ENCODE measurements at regions of chr2 and their contacts with region 1.

Region 1: GRCh38 chr2:113138428-113139322 is 11.3 kb downstream of the IL1RN start:
- DNase-seq: peak; percentile 66 to 88 (median 77)
- ATAC-seq: peak; percentile 95
- H3K4me3 ChIP-seq: no peak overlapping the region
- H3K27ac ChIP-seq: peak overlapping the region; percentile 22 to 66 (median 44)
- H3K4me1 ChIP-seq: peaks cover 11% of the 10 kb centered on the region
- H3K27me3 ChIP-seq: no peaks in the 10 kb centered on the region
- CTCF ChIP-seq: peak; percentile 73 to 89 (median 87)
- POLR2A ChIP-seq: no peak

Region 2: GRCh38 chr2:113203901-113204519 is 65.3 kb after region 1 on chr2:
- intact Hi-C with region 1: loop called (anchors 5 kb)
- DNase-seq: peak; percentile 73 to 79 (median 78)
- ATAC-seq: peak; percentile 56
- H3K4me3 ChIP-seq: no peak overlapping the region
- H3K27ac ChIP-seq: peak overlapping the region in 3 of 4 donors; percentile 27 to 40 (median 30)
- H3K4me1 ChIP-seq: peaks cover 28% of the 10 kb centered on the region
- H3K27me3 ChIP-seq: no peaks in the 10 kb centered on the region
- CTCF ChIP-seq: peak; percentile 61 to 87 (median 79)
- POLR2A ChIP-seq: peak in 1 of 3 donors; percentile 17

Region 3: DNA sequence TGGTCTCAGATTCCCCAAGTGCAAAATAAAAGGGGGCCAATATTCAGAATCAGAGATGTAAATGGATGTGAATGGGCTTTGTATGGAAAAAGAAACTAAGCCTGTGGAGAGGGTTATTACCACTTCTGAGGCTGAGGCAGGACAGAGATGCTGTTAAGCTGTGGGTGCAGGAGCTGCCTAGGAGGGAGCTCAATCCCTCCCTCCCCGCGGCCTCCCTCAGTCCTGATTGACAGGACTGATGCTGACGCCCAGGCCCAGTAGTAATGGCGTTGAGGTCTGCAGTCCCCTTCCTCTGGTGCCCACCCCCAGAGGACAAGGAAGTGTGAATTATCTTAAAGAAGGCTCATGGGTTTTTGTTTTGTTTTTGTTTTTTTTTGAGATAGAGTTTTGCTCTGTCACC is 75.5 kb after region 1 on chr2:
- intact Hi-C with region 1: no loop called
- DNase-seq: no peak
- ATAC-seq: no peak
- H3K4me3 ChIP-seq: no peak overlapping the region
- H3K27ac ChIP-seq: no peak overlapping the region
- H3K4me1 ChIP-seq: peaks cover 31% of the 10 kb centered on the region
- H3K27me3 ChIP-seq: no peaks in the 10 kb centered on the region
- CTCF ChIP-seq: no peak
- POLR2A ChIP-seq: no peak

Region 4: DNA sequence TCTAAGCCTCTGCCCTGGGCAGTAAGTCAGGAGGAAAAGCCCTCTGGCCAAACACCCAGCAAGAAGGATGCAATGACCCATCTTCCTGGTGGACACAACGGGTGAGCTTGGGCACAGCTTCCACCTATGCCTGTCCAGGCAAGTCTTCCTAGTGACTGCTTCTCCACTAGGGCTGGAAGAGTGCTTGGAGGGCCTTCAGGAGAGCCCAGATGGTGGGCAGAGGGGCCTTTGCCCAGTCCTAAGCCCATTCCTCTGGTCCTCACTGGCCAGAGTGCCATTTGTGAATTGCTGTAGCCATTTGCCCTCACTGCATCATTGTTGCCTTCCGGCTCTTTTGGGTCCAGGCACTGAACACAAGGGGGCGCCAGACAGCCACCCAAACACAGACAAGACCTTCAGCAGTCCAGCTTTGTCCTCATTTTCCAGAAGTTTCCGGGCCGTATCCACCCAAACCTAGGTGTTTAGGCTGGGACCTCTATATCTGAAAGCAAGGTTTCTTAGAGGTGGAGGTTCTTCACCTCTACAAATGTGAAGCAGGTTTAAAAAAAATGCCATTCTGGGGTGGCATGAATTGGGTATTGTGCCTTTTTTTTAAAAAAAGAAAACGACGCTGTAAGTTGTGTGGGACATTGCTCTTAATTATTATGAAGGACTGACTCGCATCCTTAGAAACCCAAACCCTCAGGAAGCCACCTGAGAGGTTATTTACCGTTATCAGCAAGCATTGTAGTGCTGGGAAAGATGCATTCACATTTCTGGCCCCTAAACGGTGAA is 110.5 kb after region 1 on chr2:
- intact Hi-C with region 1: no loop called
- DNase-seq: peak; percentile 80 to 85 (median 84)
- ATAC-seq: peak; percentile 90
- H3K4me3 ChIP-seq: no peak overlapping the region
- H3K27ac ChIP-seq: no peak overlapping the region
- H3K4me1 ChIP-seq: peaks cover 6% of the 10 kb centered on the region
- H3K27me3 ChIP-seq: no peaks in the 10 kb centered on the region
- CTCF ChIP-seq: peak; percentile 77 to 94 (median 90)
- POLR2A ChIP-seq: no peak

Region 5: DNA sequence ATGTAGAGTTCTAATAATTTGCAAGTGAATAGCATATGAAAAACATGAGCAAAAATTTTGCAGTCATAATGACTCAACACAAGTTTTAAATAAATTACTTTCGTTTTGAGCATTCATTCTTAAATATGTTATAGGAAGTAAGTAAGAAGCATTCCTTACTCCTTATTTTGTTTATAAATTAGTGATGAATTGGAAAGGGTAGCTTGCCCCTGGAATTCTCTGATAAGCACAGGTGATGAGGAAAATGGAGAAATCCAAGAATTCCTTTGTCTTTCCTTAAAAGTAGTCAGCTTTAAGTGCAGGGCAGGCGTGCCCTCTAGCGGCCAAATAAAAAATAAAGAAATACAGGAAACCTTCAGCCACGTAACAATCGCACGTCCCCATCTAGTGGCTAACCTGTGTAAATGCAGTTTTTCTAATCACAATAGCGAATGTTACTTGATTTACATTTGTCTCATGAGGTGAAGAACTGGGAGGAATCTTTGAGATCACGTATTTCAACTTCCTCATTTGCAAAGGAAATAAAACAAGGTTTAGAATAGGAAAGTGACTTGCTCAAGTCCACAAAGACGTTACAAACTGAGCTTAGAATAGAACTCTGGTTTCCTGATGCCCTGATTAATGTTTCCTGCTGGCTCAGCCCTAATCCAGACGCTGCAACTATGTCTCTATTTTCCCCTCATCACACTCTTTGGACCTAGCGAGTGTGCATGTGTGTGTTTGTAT is 251.6 kb after region 1 on chr2:
- intact Hi-C with region 1: loop called (anchors 5 kb)
- DNase-seq: peak; percentile 57 to 78 (median 72)
- ATAC-seq: peak; percentile 94
- H3K4me3 ChIP-seq: no peak overlapping the region
- H3K27ac ChIP-seq: peak overlapping the region in 1 of 4 donors; percentile 44
- H3K4me1 ChIP-seq: no peaks in the 10 kb centered on the region
- H3K27me3 ChIP-seq: no peaks in the 10 kb centered on the region
- CTCF ChIP-seq: peak; percentile 48 to 99 (median 71)
- POLR2A ChIP-seq: no peak